AG04450 (cell line): ENCODE measurements at regions of chr16 and their contacts with region 1.

Region 1: DNA sequence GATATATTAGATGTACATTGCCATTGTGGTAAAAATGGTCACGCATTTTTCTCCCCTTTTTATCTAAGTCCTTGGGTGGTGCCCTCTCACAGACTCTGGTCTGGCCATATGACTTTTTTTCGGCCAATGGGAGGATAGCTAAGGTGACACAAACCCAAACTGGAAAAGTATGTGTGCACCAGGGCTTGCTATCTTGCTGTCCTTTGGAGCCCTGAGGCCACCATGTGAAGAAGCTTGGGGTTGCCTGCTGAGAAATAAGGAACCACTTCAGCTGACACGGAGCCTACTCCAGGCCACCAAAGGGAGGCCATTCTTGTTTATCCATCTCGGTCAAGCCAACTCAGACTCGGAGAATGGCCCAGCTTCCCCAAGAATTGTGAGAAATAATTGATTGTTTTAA is 111.3 kb upstream of the ZFHX3 start:
- DNase-seq: no peak
- H3K4me3 ChIP-seq: no peak overlapping the region
- H3K27ac ChIP-seq: no peak overlapping the region
- H3K27me3 ChIP-seq: no peaks in the 10 kb centered on the region
- CTCF ChIP-seq: no peak

Region 2: DNA sequence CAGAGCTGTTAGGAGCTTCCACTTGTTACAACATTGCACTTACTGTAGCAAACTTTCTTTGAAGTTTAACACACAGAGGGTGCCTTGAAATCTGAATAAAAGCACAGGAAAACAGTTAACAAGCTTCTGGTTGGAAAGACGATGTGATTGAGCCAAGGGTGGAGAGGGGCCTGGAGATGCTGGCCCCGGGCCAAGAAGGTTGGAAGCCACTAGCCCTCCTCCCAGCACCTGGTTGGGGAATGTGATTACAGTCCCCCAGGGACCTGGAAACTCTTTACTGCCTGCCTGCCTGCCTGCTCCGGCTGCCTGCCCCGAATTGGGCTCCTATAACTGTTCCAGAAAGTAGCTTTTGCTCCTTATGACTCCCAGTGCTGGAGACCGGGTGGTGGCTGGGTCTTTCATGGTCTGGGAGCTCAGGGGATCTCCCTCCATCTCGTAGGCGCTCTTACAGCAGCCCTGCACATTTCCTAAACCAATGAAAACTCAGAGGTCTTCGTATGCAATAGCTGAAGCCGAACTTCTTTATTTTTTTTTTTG is 63.3 kb before region 1 on chr16:
- CTCF ChIA-PET with region 1: no interaction called
- POLR2A ChIA-PET with region 1: no interaction called
- DNase-seq: no peak
- H3K4me3 ChIP-seq: no peak overlapping the region
- H3K27ac ChIP-seq: no peak overlapping the region
- H3K27me3 ChIP-seq: no peaks in the 10 kb centered on the region
- CTCF ChIP-seq: no peak

Region 3: GRCh38 chr16:73122604-73123391 is 36.5 kb before region 1 on chr16:
- CTCF ChIA-PET with region 1: interaction called, 11 read pairs
- POLR2A ChIA-PET with region 1: no interaction called
- DNase-seq: no peak
- H3K4me3 ChIP-seq: no peak overlapping the region
- H3K27ac ChIP-seq: no peak overlapping the region
- H3K27me3 ChIP-seq: no peaks in the 10 kb centered on the region
- CTCF ChIP-seq: no peak